B cell (primary cell): ENCODE measurements at regions of chr7 and their contacts with region 1.

Region 1: GRCh38 chr7:16564909-16565426 is 38.3 kb downstream of the LRRC72 start:
- DNase-seq: peak; percentile 60
- ATAC-seq: peak; percentile 28
- H3K4me3 ChIP-seq: no peak overlapping the region
- H3K4me3 Mint-ChIP-seq: no peak overlapping the region
- H3K27ac ChIP-seq: no peak overlapping the region
- H3K27ac Mint-ChIP-seq: no peak overlapping the region
- H3K4me1 ChIP-seq: peaks cover 8 to 10% of the 10 kb centered on the region in 2 donors
- H3K4me1 Mint-ChIP-seq: peaks cover 16% of the 10 kb centered on the region
- H3K27me3 ChIP-seq: no peaks in the 10 kb centered on the region
- H3K27me3 Mint-ChIP-seq: peaks cover 3% of the 10 kb centered on the region
- CTCF ChIP-seq: peak; percentile 86

Region 2: GRCh38 chr7:15326044-15326644 is 1238.8 kb before region 1 on chr7:
- CTCF ChIA-PET with region 1: no interaction called
- POLR2A ChIA-PET with region 1: no interaction called
- intact Hi-C with region 1: loop called (anchors 10 kb)
- DNase-seq: no peak
- ATAC-seq: no peak
- H3K4me3 ChIP-seq: no peak overlapping the region
- H3K4me3 Mint-ChIP-seq: no peak overlapping the region
- H3K27ac ChIP-seq: no peak overlapping the region
- H3K27ac Mint-ChIP-seq: no peak overlapping the region
- H3K4me1 ChIP-seq: no peaks in the 10 kb centered on the region
- H3K4me1 Mint-ChIP-seq: no peaks in the 10 kb centered on the region
- H3K27me3 ChIP-seq: no peaks in the 10 kb centered on the region
- H3K27me3 Mint-ChIP-seq: no peaks in the 10 kb centered on the region
- CTCF ChIP-seq: peak; percentile 2

Region 3: DNA sequence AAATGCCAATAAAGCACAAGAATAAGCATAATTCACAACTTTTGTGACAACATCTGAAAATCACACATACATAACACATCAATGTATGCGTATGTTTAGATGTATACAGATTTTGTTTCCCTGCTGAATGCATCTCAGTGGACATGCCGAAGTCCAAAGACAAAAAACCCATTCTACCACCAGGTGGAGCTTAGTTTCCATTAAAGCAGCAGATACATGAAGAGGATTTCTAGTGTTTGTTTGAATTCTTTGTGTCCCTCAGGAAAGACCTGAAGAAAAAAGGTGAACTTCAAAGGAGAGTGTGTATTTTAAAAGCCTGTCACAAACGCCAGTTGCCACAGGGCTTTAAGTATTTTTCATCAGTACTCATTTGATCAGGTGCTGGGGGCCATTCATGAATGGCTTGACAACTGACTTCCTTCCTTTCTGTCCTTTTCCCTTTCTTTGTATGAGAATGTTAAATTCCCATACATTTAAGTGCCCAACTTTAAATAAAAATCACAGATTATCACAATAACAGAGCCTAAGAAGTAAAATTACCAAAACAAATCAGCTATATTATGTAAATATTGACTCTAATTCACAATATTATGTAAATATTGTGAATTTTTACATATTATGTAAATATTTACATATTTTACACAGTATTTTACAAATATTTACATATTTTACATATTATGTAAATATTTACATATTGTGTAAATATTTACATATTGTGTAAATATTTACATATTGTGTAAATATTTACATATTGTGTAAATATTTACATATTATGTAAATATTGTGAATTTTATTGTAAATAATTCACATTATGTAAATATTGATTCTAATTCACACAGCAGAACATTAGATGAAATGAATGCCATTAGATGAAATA is 486.7 kb before region 1 on chr7:
- CTCF ChIA-PET with region 1: interaction called, 43 read pairs
- POLR2A ChIA-PET with region 1: no interaction called
- intact Hi-C with region 1: no loop called
- DNase-seq: peak; percentile 27
- ATAC-seq: no peak
- H3K4me3 ChIP-seq: no peak overlapping the region
- H3K4me3 Mint-ChIP-seq: no peak overlapping the region
- H3K27ac ChIP-seq: no peak overlapping the region
- H3K27ac Mint-ChIP-seq: no peak overlapping the region
- H3K4me1 ChIP-seq: no peaks in the 10 kb centered on the region
- H3K4me1 Mint-ChIP-seq: no peaks in the 10 kb centered on the region
- H3K27me3 ChIP-seq: no peaks in the 10 kb centered on the region
- H3K27me3 Mint-ChIP-seq: no peaks in the 10 kb centered on the region
- CTCF ChIP-seq: peak; percentile 46

Region 4: GRCh38 chr7:16420649-16421332 is 144.2 kb before region 1 on chr7:
- CTCF ChIA-PET with region 1: interaction called, 13 read pairs
- POLR2A ChIA-PET with region 1: no interaction called
- intact Hi-C with region 1: no loop called
- DNase-seq: peak; percentile 91
- ATAC-seq: peak; percentile 89
- H3K4me3 ChIP-seq: peak overlapping the region; percentile 55 to 86 (median 65)
- H3K4me3 Mint-ChIP-seq: peak overlapping the region; percentile 95
- H3K27ac ChIP-seq: peak overlapping the region; percentile 78 to 81
- H3K27ac Mint-ChIP-seq: peak overlapping the region; percentile 95
- H3K4me1 ChIP-seq: peaks cover 10 to 14% of the 10 kb centered on the region in 2 donors
- H3K4me1 Mint-ChIP-seq: peaks cover 24% of the 10 kb centered on the region
- H3K27me3 ChIP-seq: no peaks in the 10 kb centered on the region
- H3K27me3 Mint-ChIP-seq: no peaks in the 10 kb centered on the region
- CTCF ChIP-seq: peak; percentile 61

Region 5: DNA sequence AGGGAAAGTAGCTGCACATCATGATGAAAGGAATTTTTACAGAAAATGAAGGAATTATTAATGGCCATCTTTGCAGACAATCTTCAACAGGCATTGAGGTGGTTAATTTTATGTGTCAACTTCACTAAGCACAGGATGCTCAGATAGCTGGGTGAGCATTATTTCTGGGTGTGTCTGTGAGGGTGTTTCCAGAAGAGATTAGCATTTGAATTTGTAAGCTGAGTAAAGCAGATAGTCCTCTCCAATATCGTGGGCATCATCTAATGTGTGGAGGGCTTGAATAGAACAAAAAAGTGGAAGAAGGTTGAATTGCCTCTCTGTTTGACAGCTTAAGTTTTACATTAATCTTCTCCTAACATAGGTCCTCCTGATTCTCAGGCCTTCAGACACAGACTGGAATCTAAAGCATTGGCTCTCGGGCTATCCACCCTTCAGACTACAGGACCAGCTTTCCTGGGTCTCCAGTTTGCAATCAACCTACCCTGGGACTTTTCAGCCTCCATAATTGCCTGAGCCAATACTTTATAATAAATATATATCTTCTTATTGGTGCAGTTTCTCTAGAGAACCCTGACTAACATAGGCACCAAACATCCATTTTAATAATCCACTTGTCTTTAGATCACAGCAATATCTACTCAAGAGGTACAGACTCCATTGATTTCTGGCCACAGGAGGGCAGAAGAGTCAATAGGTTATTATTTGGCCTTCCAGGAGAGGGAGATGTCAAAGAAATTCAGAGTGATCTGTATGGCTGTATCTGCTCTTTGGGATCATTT is 133.1 kb before region 1 on chr7:
- CTCF ChIA-PET with region 1: interaction called, 41 read pairs
- POLR2A ChIA-PET with region 1: no interaction called
- intact Hi-C with region 1: loop called (anchors 1 kb)
- DNase-seq: peak; percentile 46
- ATAC-seq: peak; percentile 61
- H3K4me3 ChIP-seq: no peak overlapping the region
- H3K4me3 Mint-ChIP-seq: no peak overlapping the region
- H3K27ac ChIP-seq: no peak overlapping the region
- H3K27ac Mint-ChIP-seq: no peak overlapping the region
- H3K4me1 ChIP-seq: no peaks in the 10 kb centered on the region
- H3K4me1 Mint-ChIP-seq: no peaks in the 10 kb centered on the region
- H3K27me3 ChIP-seq: no peaks in the 10 kb centered on the region
- H3K27me3 Mint-ChIP-seq: peaks cover 7% of the 10 kb centered on the region
- CTCF ChIP-seq: peak; percentile 49

Region 6: GRCh38 chr7:16554518-16555236 is 10.3 kb before region 1 on chr7:
- CTCF ChIA-PET with region 1: interaction called, 15 read pairs
- POLR2A ChIA-PET with region 1: no interaction called
- intact Hi-C with region 1: no loop called
- DNase-seq: no peak
- ATAC-seq: no peak
- H3K4me3 ChIP-seq: no peak overlapping the region
- H3K4me3 Mint-ChIP-seq: no peak overlapping the region
- H3K27ac ChIP-seq: no peak overlapping the region
- H3K27ac Mint-ChIP-seq: no peak overlapping the region
- H3K4me1 ChIP-seq: no peaks in the 10 kb centered on the region
- H3K4me1 Mint-ChIP-seq: no peaks in the 10 kb centered on the region
- H3K27me3 ChIP-seq: no peaks in the 10 kb centered on the region
- H3K27me3 Mint-ChIP-seq: peaks cover 11% of the 10 kb centered on the region
- CTCF ChIP-seq: no peak